ENCODE measurements at regions of chrX and their contacts with region 1.

Region 1: GRCh38 chrX:119468930-119469635 is 839 bp downstream of the SLC25A5 start:
- DNase-seq: peak; percentile 92
- H3K4me3 Mint-ChIP-seq: peak overlapping the region; percentile 85
- H3K27ac Mint-ChIP-seq: peak overlapping the region; percentile 90
- H3K4me1 Mint-ChIP-seq: peaks cover 21% of the 10 kb centered on the region
- H3K27me3 Mint-ChIP-seq: no peaks in the 10 kb centered on the region

Region 2: GRCh38 chrX:118459494-118459893 is 1009.6 kb before region 1 on chrX:
- CTCF ChIA-PET with region 1: no interaction called
- POLR2A ChIA-PET with region 1: no interaction called
- intact Hi-C with region 1: no loop called
- DNase-seq: peak; percentile 15
- H3K4me3 Mint-ChIP-seq: no peak overlapping the region
- H3K27ac Mint-ChIP-seq: no peak overlapping the region
- H3K4me1 Mint-ChIP-seq: no peaks in the 10 kb centered on the region
- H3K27me3 Mint-ChIP-seq: no peaks in the 10 kb centered on the region

Region 3: DNA sequence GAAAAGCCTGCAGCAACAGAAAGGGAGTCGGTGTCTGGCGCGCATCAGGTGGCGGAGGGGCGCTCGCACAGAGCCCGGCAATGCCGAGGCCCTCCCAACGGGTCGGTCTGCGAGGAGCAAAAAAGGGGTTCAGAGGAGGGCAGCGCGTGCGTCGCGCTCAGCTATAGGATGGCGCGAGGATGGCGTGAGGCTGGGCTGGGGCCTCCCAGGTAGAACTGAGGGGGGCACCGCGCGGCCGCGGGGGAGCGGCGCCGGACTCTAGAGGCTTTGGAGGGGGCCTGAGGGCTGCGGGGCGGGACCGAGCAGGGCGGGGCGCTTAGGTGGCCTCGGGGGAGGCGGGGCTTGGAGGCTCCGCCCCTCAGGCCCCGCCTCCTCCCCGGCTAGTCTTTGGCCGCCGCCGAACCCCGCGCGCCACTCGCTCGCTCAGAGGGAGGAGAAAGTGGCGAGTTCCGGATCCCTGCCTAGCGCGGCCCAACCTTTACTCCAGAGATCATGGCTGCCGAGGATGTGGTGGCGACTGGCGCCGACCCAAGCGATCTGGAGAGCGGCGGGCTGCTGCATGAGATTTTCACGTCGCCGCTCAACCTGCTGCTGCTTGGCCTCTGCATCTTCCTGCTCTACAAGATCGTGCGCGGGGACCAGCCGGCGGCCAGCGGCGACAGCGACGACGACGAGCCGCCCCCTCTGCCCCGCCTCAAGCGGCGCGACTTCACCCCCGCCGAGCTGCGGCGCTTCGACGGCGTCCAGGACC is 233.0 kb before region 1 on chrX and contains the start of gene PGRMC1:
- CTCF ChIA-PET with region 1: no interaction called
- POLR2A ChIA-PET with region 1: interaction called, 4 read pairs
- intact Hi-C with region 1: loop called (anchors 2 kb)
- DNase-seq: peak; percentile 83
- H3K4me3 Mint-ChIP-seq: peak within 1 kb of the TSS; percentile 80
- H3K27ac Mint-ChIP-seq: peak within 1 kb of the TSS; percentile 79
- H3K4me1 Mint-ChIP-seq: peaks cover 24% of the 10 kb centered on the region
- H3K27me3 Mint-ChIP-seq: peaks cover 2% of the 10 kb centered on the region
- total RNA-seq, gene PGRMC1: 29.0 to 29.4 TPM

Region 4: GRCh38 chrX:119482481-119483480 is 13.7 kb after region 1 on chrX:
- CTCF ChIA-PET with region 1: interaction called, 18 read pairs
- POLR2A ChIA-PET with region 1: interaction called, 6 read pairs
- intact Hi-C with region 1: loop called (anchors 2 kb)
- DNase-seq: peak; percentile 77
- H3K4me3 Mint-ChIP-seq: peak overlapping the region; percentile 59
- H3K27ac Mint-ChIP-seq: peak overlapping the region; percentile 45
- H3K4me1 Mint-ChIP-seq: peaks cover 4% of the 10 kb centered on the region
- H3K27me3 Mint-ChIP-seq: no peaks in the 10 kb centered on the region

Region 5: DNA sequence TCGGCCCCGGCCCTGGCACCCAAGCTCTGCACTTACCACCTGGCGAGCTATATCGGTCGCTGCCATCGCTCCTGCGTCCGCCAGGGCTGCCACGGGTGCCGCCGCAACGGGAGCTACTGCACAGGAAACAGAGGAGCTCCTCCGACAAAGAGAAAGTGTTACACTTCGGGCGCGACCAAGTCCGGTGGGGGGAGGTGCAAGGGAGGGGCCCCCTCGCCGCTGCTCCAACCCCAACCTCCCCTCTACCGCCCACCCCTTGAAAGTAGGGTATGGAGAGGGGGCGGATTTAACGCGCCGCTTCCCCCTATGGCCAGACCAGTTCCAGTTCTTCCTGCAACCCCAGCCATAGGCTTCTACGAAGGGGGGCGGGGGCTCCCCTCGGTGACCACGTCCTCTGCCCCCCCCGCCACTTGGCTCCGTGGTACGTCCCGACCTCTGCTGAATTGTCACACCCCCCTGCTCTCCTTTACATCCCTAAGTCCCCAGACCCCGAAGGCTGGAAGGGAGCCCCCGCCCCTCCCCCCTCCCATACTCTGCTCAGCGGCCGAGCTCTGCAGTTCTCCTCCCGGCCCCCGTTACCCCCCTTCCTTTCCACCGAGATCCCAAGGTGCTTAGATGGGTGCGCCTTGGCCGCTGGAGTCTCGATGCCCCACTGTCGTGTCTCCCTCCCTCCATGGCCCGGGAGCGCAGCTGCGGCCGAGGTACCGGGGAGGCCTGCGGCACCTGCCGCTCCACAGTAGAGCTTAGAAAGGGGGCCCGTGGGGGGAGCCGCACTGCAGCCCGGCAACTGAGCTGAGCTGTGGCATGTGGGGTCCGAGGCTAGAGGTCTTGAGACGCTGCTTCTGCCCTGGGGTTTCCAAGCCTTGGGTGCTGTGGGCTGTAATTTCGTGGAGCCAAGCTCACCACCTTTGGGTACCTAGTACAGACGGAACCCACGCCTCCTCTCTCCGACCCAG is 224.2 kb after region 1 on chrX and contains the start of gene SEPTIN6:
- CTCF ChIA-PET with region 1: no interaction called
- POLR2A ChIA-PET with region 1: interaction called, 4 read pairs
- intact Hi-C with region 1: loop called (anchors 5 kb)
- DNase-seq: peak; percentile 89
- H3K4me3 Mint-ChIP-seq: peak within 1 kb of the TSS; percentile 88
- H3K27ac Mint-ChIP-seq: peak within 1 kb of the TSS; percentile 99
- H3K4me1 Mint-ChIP-seq: peaks cover 6% of the 10 kb centered on the region
- H3K27me3 Mint-ChIP-seq: no peaks in the 10 kb centered on the region
- total RNA-seq, gene SEPTIN6: 154 to 156 TPM